MCF 10A (cell line): ENCODE measurements at regions of chr5 and their contacts with region 1.

Region 1: GRCh38 chr5:107673368-107674136 is 2.8 kb upstream of the EFNA5 start:
- DNase-seq: peak; percentile 95
- H3K4me3 Mint-ChIP-seq: peak overlapping the region; percentile 84
- H3K27ac Mint-ChIP-seq: peak overlapping the region; percentile 93
- H3K4me1 Mint-ChIP-seq: peaks cover 20% of the 10 kb centered on the region
- H3K27me3 Mint-ChIP-seq: no peaks in the 10 kb centered on the region
- CTCF ChIP-seq: peak; percentile 96

Region 2: GRCh38 chr5:106269252-106269843 is 1404.2 kb before region 1 on chr5:
- CTCF ChIA-PET with region 1: interaction called, 7 read pairs
- POLR2A ChIA-PET with region 1: interaction called, 3 read pairs
- intact Hi-C with region 1: loop called (anchors 1 kb)
- DNase-seq: peak; percentile 41
- H3K4me3 Mint-ChIP-seq: no peak overlapping the region
- H3K27ac Mint-ChIP-seq: no peak overlapping the region
- H3K4me1 Mint-ChIP-seq: no peaks in the 10 kb centered on the region
- H3K27me3 Mint-ChIP-seq: no peaks in the 10 kb centered on the region
- CTCF ChIP-seq: peak; percentile 57

Region 3: GRCh38 chr5:106875591-106876297 is 797.8 kb before region 1 on chr5:
- CTCF ChIA-PET with region 1: no interaction called
- POLR2A ChIA-PET with region 1: no interaction called
- intact Hi-C with region 1: loop called (anchors 5 kb)
- DNase-seq: peak; percentile 81
- H3K4me3 Mint-ChIP-seq: no peak overlapping the region
- H3K27ac Mint-ChIP-seq: no peak overlapping the region
- H3K4me1 Mint-ChIP-seq: peaks cover 14% of the 10 kb centered on the region
- H3K27me3 Mint-ChIP-seq: no peaks in the 10 kb centered on the region
- CTCF ChIP-seq: peak; percentile 60

Region 4: GRCh38 chr5:107306597-107306996 is 367.0 kb before region 1 on chr5:
- CTCF ChIA-PET with region 1: interaction called, 4 read pairs
- POLR2A ChIA-PET with region 1: no interaction called
- intact Hi-C with region 1: loop called (anchors 1 kb)
- DNase-seq: peak; percentile 6
- H3K4me3 Mint-ChIP-seq: no peak overlapping the region
- H3K27ac Mint-ChIP-seq: no peak overlapping the region
- H3K4me1 Mint-ChIP-seq: no peaks in the 10 kb centered on the region
- H3K27me3 Mint-ChIP-seq: no peaks in the 10 kb centered on the region
- CTCF ChIP-seq: no peak

Region 5: DNA sequence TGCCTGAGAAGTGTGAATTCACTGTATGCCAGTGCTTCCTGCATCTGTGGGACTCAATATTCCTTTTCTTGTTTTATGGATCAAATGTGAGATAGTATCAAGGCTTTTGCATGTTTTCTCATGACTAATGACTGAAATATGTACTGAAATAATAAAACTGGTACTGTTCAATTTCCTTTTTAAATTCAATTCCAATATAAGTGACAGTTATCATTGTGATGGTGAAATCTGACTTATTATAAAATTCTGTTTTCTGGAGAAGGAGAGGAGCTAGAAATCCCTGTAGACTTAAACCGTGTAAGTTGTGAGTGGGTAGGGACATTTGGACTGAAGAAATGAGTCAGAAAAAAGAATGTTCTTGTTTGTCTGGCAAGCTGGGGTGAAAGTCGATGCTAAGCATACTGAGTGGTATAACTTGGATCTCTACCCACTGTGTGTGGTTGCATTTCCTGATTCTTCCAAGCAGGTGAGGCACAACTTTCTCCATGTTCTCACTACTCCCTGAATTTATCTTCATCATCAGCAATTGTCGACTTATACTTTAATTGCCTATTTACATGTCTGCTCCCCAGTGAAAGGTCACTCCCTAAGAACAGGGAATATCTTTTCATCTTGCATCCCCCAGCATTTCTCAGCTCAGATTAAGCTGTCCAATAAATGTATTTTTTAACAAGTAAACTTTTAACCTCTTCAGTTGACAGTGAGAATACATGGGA is 247.9 kb before region 1 on chr5:
- CTCF ChIA-PET with region 1: interaction called, 3 read pairs
- POLR2A ChIA-PET with region 1: interaction called, 8 read pairs
- intact Hi-C with region 1: loop called (anchors 5 kb)
- DNase-seq: peak; percentile 82
- H3K4me3 Mint-ChIP-seq: peak overlapping the region; percentile 40
- H3K27ac Mint-ChIP-seq: peak overlapping the region; percentile 88
- H3K4me1 Mint-ChIP-seq: peaks cover 39% of the 10 kb centered on the region
- H3K27me3 Mint-ChIP-seq: no peaks in the 10 kb centered on the region
- CTCF ChIP-seq: no peak

Region 6: DNA sequence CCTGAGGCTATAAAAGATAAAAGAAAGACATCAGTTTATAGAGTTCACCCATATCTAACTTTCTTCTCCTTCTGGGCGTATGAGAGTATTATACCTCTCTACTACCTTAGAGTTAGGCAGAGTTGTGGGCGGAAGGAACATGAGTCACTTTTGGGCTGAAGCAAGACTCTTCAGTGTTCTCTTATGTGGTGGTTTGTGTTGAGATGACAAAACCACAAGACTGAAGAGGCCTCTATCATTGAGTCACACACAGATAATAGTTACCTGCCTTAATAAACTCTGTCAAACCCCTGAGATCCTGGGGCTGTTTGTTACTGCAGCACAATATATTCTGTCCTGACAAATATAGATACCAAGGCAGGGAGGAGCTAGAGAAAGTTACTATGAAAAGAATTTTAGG is 187.1 kb before region 1 on chr5:
- CTCF ChIA-PET with region 1: no interaction called
- POLR2A ChIA-PET with region 1: no interaction called
- intact Hi-C with region 1: no loop called
- DNase-seq: peak; percentile 94
- H3K4me3 Mint-ChIP-seq: no peak overlapping the region
- H3K27ac Mint-ChIP-seq: peak overlapping the region; percentile 72
- H3K4me1 Mint-ChIP-seq: peaks cover 40% of the 10 kb centered on the region
- H3K27me3 Mint-ChIP-seq: no peaks in the 10 kb centered on the region
- CTCF ChIP-seq: no peak

Region 7: GRCh38 chr5:107542428-107542827 is 131.1 kb before region 1 on chr5:
- CTCF ChIA-PET with region 1: interaction called, 4 read pairs
- POLR2A ChIA-PET with region 1: interaction called, 19 read pairs
- intact Hi-C with region 1: no loop called
- DNase-seq: peak; percentile 99
- H3K4me3 Mint-ChIP-seq: peak overlapping the region; percentile 64
- H3K27ac Mint-ChIP-seq: peak overlapping the region; percentile 92
- H3K4me1 Mint-ChIP-seq: peaks cover 46% of the 10 kb centered on the region
- H3K27me3 Mint-ChIP-seq: no peaks in the 10 kb centered on the region
- CTCF ChIP-seq: no peak

Region 8: GRCh38 chr5:107655836-107656235 is 17.7 kb before region 1 on chr5:
- CTCF ChIA-PET with region 1: interaction called, 4 read pairs
- POLR2A ChIA-PET with region 1: interaction called, 11 read pairs
- intact Hi-C with region 1: no loop called
- DNase-seq: peak; percentile 73
- H3K4me3 Mint-ChIP-seq: peak overlapping the region; percentile 64
- H3K27ac Mint-ChIP-seq: peak overlapping the region; percentile 95
- H3K4me1 Mint-ChIP-seq: peaks cover 33% of the 10 kb centered on the region
- H3K27me3 Mint-ChIP-seq: no peaks in the 10 kb centered on the region
- CTCF ChIP-seq: no peak

Region 9: DNA sequence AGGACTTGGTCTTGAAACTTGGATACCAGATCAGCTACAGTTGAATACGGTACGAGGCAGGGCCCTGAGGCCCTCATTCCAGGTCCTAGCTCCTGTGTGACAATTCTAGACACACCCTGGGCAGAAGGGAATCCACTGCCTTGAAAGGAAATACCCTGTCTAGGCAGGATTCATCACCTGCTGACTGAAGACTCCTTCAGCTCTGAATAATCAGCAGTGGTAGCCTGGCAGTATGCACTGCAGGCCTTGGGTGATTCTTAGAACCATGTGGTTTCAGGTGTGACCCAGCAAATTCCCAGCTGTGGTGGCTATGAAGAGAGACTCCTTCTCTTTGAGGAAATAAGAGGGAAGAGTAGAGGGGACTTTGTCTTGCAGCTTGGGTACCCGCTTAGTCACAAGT is 14.4 kb after region 1 on chr5:
- CTCF ChIA-PET with region 1: no interaction called
- POLR2A ChIA-PET with region 1: no interaction called
- intact Hi-C with region 1: no loop called
- DNase-seq: no peak
- H3K4me3 Mint-ChIP-seq: no peak overlapping the region
- H3K27ac Mint-ChIP-seq: no peak overlapping the region
- H3K4me1 Mint-ChIP-seq: no peaks in the 10 kb centered on the region
- H3K27me3 Mint-ChIP-seq: no peaks in the 10 kb centered on the region
- CTCF ChIP-seq: no peak

Region 10: DNA sequence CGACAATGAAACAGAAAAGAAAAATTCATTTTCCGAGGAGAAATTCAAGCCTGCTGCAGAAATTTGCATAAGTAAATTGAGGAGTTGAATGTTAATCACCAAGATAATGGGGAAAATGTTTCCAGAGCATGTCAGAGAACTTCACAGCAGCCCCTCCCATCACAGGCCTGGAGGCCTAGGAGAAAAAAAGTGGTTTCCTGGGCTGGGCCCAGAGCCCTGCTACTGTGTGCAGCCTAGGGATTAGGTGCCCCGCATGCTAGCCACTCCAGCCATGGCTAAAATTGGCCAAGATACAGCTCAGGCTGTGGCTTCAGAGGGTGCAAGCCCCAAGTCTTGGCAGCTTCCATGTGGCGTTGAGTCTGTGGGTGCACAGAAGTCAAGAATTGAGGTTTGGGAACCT is 79.9 kb after region 1 on chr5:
- CTCF ChIA-PET with region 1: no interaction called
- POLR2A ChIA-PET with region 1: no interaction called
- intact Hi-C with region 1: no loop called
- DNase-seq: no peak
- H3K4me3 Mint-ChIP-seq: no peak overlapping the region
- H3K27ac Mint-ChIP-seq: no peak overlapping the region
- H3K4me1 Mint-ChIP-seq: no peaks in the 10 kb centered on the region
- H3K27me3 Mint-ChIP-seq: no peaks in the 10 kb centered on the region
- CTCF ChIP-seq: no peak

Region 11: GRCh38 chr5:108238936-108239887 is 565.7 kb after region 1 on chr5:
- CTCF ChIA-PET with region 1: no interaction called
- POLR2A ChIA-PET with region 1: no interaction called
- intact Hi-C with region 1: no loop called
- DNase-seq: peak; percentile 93
- H3K4me3 Mint-ChIP-seq: no peak overlapping the region
- H3K27ac Mint-ChIP-seq: peak overlapping the region; percentile 35
- H3K4me1 Mint-ChIP-seq: peaks cover 4% of the 10 kb centered on the region
- H3K27me3 Mint-ChIP-seq: no peaks in the 10 kb centered on the region
- CTCF ChIP-seq: no peak